Panc1 (cell line): ENCODE measurements at regions of chr12 and their contacts with region 1.

Region 1: DNA sequence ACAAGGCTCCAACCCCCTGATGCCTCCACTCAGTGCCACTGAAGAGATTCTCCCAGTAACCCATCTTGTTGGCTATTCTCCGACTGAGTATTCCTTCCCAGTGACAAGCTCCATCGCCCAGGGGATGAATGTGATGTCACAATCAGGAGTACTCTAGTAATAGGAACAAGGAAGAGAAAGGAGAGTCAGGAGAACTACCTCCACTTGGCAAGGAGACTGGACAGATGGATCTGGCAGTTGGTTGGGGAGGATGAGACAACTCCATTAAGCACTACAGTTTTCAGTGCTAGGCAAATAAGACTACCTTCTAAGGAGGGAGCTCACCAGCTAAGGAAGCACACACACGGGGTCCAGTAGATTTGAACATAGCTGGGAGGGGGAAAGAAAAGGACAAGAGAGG is 5.3 kb downstream of the RNF41 start:
- DNase-seq: no peak
- ATAC-seq: no peak; the same call in 1 of the 2 replicates
- H3K4me3 ChIP-seq: no peak overlapping the region
- H3K27ac ChIP-seq: no peak overlapping the region
- H3K4me1 ChIP-seq: no peaks in the 10 kb centered on the region
- H3K27me3 ChIP-seq: no peaks in the 10 kb centered on the region
- CTCF ChIP-seq: no peak

Region 2: GRCh38 chr12:56448860-56449621 is 232.6 kb after region 1 on chr12 and contains the start of gene TIMELESS:
- CTCF ChIA-PET with region 1: interaction called, 11 read pairs
- POLR2A ChIA-PET with region 1: no interaction called
- in situ Hi-C with region 1: no loop called
- intact Hi-C with region 1: no loop called
- DNase-seq: peak; percentile 81
- ATAC-seq: peak; percentile 99
- H3K4me3 ChIP-seq: peak within 1 kb of the TSS; percentile 72 to 84
- H3K27ac ChIP-seq: peak within 1 kb of the TSS; percentile 99
- H3K4me1 ChIP-seq: 0 out of 2 replicates have a peak, but pooled peaks cover 5% of the 10 kb centered on the region
- H3K27me3 ChIP-seq: no peaks in the 10 kb centered on the region
- CTCF ChIP-seq: no peak
- total RNA-seq, gene TIMELESS: 46.2 TPM